ENCODE measurements at regions of chr1 and their contacts with region 1.

Region 1: DNA sequence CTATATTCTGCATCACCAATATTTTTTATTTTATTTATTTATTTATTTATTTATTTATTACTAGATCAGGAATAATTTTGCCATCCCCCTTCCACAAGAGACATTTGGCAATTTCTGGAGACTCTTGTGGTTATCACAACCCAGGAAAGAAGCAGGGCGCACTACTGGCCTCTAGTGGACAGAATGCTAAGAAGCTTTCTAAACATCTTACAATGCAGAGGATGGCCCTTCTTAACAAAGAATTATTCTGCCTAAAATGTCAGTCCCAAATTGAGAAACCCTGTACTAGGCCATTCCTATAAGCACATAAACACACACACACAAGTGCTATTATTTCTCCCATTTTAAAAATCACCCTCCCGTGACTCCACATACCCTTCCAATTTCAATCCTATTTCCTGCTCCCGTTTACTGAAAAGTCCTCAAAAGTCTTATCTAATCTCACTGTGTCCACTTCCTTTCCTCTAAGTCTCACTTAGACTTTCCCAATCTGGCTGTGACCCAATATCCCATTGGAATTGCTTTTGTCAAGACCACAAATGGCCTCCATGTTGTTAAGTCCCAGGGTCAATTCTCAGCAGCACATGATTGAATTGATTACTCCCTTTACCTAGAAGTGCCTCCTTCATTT is 43.7 kb upstream of the RNF11 start:
- DNase-seq: peak; percentile 35 to 67
- ATAC-seq: peak; percentile 77 to 83; a peak in 5 of 6 replicates
- H3K4me3 ChIP-seq: no peak overlapping the region
- H3K27ac ChIP-seq: no peak overlapping the region
- H3K4me1 ChIP-seq: no peaks in the 10 kb centered on the region
- CTCF ChIP-seq: peak; percentile 76
- EP300 ChIP-seq: no peak
- POLR2A ChIP-seq: no peak
- RAD21 ChIP-seq: peak; percentile 51 to 57; a peak in 3 of 5 replicates

Region 2: GRCh38 chr1:50774759-50775351 is 417.5 kb before region 1 on chr1:
- CTCF ChIA-PET with region 1: interaction called, 21 read pairs
- POLR2A ChIA-PET with region 1: no interaction called
- DNase-seq: peak; percentile 4 to 57
- ATAC-seq: peak in 1 of 2 experiments; percentile 73; a peak in 3 of 6 replicates
- H3K4me3 ChIP-seq: no peak overlapping the region
- H3K27ac ChIP-seq: no peak overlapping the region
- H3K4me1 ChIP-seq: peaks cover 5% of the 10 kb centered on the region; the same call in 1 of the 3 replicates
- CTCF ChIP-seq: peak; percentile 77
- EP300 ChIP-seq: no peak
- POLR2A ChIP-seq: no peak
- RAD21 ChIP-seq: peak; percentile 67 to 74

Region 3: GRCh38 chr1:50929376-50929958 is 262.9 kb before region 1 on chr1:
- CTCF ChIA-PET with region 1: interaction called, 12 read pairs
- POLR2A ChIA-PET with region 1: no interaction called
- DNase-seq: peak; percentile 5 to 39
- ATAC-seq: no peak
- H3K4me3 ChIP-seq: no peak overlapping the region
- H3K27ac ChIP-seq: no peak overlapping the region
- H3K4me1 ChIP-seq: no peaks in the 10 kb centered on the region
- CTCF ChIP-seq: peak; percentile 61
- EP300 ChIP-seq: no peak
- POLR2A ChIP-seq: no peak
- RAD21 ChIP-seq: peak; percentile 36 to 49; a peak in 4 of 5 replicates

Region 4: DNA sequence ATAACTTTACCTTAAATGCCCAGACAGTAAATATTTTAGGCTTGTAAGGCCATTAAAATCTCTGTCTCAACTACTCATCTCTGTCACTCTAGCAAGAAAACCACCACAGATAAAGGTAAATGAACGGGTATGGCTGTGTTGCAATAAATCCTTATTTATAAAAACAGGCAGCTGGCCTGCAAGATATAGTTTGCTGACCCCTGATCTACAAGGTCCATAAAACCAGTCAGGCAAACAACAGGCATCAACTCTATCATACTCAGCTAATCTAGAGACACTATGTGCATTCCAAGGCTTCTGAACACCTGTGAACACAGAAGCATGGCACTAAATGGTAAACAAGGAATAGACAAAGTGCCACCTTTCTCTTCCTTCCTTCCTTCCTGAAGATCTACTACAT is 241.9 kb before region 1 on chr1:
- CTCF ChIA-PET with region 1: interaction called, 13 read pairs
- POLR2A ChIA-PET with region 1: no interaction called
- DNase-seq: no peak
- ATAC-seq: no peak
- H3K4me3 ChIP-seq: no peak overlapping the region
- H3K27ac ChIP-seq: no peak overlapping the region
- H3K4me1 ChIP-seq: no peaks in the 10 kb centered on the region
- CTCF ChIP-seq: no peak
- EP300 ChIP-seq: no peak
- POLR2A ChIP-seq: no peak
- RAD21 ChIP-seq: no peak

Region 5: GRCh38 chr1:51175278-51175677 is 17.1 kb before region 1 on chr1:
- CTCF ChIA-PET with region 1: interaction called, 21 read pairs
- POLR2A ChIA-PET with region 1: no interaction called
- DNase-seq: no peak
- ATAC-seq: no peak
- H3K4me3 ChIP-seq: no peak overlapping the region
- H3K27ac ChIP-seq: no peak overlapping the region
- H3K4me1 ChIP-seq: peaks cover 5% of the 10 kb centered on the region; the same call in 1 of the 3 replicates
- CTCF ChIP-seq: no peak
- EP300 ChIP-seq: no peak
- POLR2A ChIP-seq: no peak
- RAD21 ChIP-seq: no peak

Region 6: GRCh38 chr1:51203121-51203873 is 11.0 kb after region 1 on chr1:
- CTCF ChIA-PET with region 1: interaction called, 11 read pairs
- POLR2A ChIA-PET with region 1: no interaction called
- DNase-seq: no peak
- ATAC-seq: no peak
- H3K4me3 ChIP-seq: no peak overlapping the region
- H3K27ac ChIP-seq: no peak overlapping the region
- H3K4me1 ChIP-seq: no peaks in the 10 kb centered on the region
- CTCF ChIP-seq: no peak
- EP300 ChIP-seq: no peak
- POLR2A ChIP-seq: no peak
- RAD21 ChIP-seq: no peak

Measured in A549 (cell line).